ENCODE measurements at regions of chr4 and their contacts with region 1.

Region 1: GRCh38 chr4:21677173-21677572 is 271.4 kb downstream of the KCNIP4 start:
- DNase-seq: no peak
- H3K4me3 ChIP-seq: no peak overlapping the region
- H3K27ac ChIP-seq: no peak overlapping the region
- H3K4me1 ChIP-seq: no peaks in the 10 kb centered on the region
- H3K27me3 ChIP-seq: no peaks in the 10 kb centered on the region
- CTCF ChIP-seq: no peak

Region 2: GRCh38 chr4:21569638-21570037 is 107.5 kb before region 1 on chr4:
- CTCF ChIA-PET with region 1: no interaction called
- dilution Hi-C with region 1: loop called (anchors 5 kb)
- in situ Hi-C with region 1: no loop called
- intact Hi-C with region 1: no loop called
- DNase-seq: no peak
- H3K4me3 ChIP-seq: no peak overlapping the region
- H3K27ac ChIP-seq: no peak overlapping the region
- H3K4me1 ChIP-seq: no peaks in the 10 kb centered on the region
- H3K27me3 ChIP-seq: peaks cover 3% of the 10 kb centered on the region
- CTCF ChIP-seq: no peak

Region 3: GRCh38 chr4:21628116-21628670 is 49.0 kb before region 1 on chr4:
- CTCF ChIA-PET with region 1: no interaction called
- dilution Hi-C with region 1: loop called (anchors 5 kb)
- in situ Hi-C with region 1: no loop called
- intact Hi-C with region 1: no loop called
- DNase-seq: no peak
- H3K4me3 ChIP-seq: no peak overlapping the region
- H3K27ac ChIP-seq: no peak overlapping the region
- H3K4me1 ChIP-seq: no peaks in the 10 kb centered on the region
- H3K27me3 ChIP-seq: no peaks in the 10 kb centered on the region
- CTCF ChIP-seq: no peak

Region 4: DNA sequence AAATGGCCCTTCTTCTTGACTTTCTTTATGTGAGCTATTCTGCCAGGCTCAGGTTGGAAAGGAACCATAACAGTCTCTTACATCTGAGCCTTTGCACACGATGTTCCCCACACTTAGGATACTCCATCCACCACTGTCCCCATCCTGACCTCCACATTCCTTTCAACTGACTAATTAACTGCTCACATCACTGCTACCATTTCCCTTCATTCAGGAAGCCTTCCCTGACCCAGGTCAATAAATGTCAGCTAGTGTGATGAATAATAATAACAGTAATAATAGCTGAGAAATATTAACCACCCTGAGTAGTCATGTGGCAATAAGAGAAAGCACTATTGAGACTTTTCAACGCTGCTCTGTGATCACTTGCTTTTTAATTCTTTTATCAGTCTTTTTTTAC is 20.3 kb before region 1 on chr4:
- CTCF ChIA-PET with region 1: no interaction called
- dilution Hi-C with region 1: no loop called
- in situ Hi-C with region 1: no loop called
- intact Hi-C with region 1: no loop called
- DNase-seq: peak; percentile 59
- H3K4me3 ChIP-seq: no peak overlapping the region
- H3K27ac ChIP-seq: no peak overlapping the region
- H3K4me1 ChIP-seq: peaks cover 15% of the 10 kb centered on the region
- H3K27me3 ChIP-seq: no peaks in the 10 kb centered on the region
- CTCF ChIP-seq: no peak

Region 5: DNA sequence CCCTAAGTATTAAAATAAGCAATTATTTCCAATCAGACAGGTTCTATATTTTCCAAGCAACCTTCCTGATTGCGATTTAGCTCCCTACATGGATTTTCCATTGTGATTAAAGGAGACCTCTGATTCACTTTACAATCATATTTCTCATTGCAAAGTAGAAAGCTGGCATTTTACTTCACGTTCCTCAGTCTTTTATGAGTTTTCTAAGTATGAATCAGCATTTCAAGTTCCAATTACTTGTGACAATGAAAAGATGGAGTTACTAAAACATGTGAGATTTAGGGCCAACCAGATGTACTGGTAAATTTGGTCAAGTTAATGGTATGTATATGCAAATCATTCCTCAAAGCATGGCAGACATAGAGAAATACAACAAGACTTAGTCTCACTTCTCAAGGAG is 65.2 kb after region 1 on chr4:
- CTCF ChIA-PET with region 1: no interaction called
- dilution Hi-C with region 1: no loop called
- in situ Hi-C with region 1: no loop called
- intact Hi-C with region 1: no loop called
- DNase-seq: no peak
- H3K4me3 ChIP-seq: no peak overlapping the region
- H3K27ac ChIP-seq: no peak overlapping the region
- H3K4me1 ChIP-seq: no peaks in the 10 kb centered on the region
- H3K27me3 ChIP-seq: no peaks in the 10 kb centered on the region
- CTCF ChIP-seq: no peak